Right ventricle myocardium superior (tissue), 1 donor: ENCODE measurements at regions of chr9 and their contacts with region 1.

Region 1: DNA sequence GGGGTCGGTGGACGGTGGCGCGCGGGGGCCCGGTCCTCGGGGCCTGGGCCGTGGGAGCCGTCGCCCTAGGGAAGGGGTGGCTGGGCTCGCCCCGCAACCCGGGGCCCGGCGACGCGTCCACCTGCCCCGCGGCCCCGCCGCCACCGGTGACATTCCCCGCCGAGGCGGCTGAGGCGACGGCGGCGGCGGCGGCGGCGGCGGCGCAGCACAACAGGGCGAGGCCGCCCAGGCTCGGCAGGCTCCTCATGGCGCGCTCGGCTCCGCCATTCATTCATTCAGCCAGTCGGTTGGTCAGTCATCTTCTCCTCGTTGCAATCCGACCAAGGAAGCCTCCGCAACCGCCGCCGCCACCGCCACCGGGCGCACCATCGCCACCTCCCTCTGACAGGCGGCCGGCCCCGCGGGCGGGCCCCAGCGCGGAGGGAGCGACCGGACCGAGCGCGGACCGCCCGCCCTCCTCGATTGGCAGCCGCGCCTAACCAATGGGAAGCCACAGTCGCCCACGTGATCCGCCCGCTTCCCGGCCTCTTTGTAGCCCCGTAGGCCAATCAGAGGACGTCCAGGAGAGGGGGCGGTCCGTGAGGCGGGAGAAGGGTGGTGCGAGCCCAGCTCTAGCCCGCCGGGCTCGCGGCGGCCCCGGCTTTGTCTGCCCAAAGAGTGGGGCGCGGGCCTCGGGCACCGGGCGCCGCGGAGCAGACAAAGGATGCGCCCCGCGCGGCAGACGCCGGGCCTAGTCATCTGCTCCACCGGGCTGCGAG is at the start of gene MEGF9:
- DNase-seq: peak; percentile 99
- ATAC-seq: peak; percentile 96
- total RNA-seq, gene MEGF9: 18.2 TPM

Region 2: DNA sequence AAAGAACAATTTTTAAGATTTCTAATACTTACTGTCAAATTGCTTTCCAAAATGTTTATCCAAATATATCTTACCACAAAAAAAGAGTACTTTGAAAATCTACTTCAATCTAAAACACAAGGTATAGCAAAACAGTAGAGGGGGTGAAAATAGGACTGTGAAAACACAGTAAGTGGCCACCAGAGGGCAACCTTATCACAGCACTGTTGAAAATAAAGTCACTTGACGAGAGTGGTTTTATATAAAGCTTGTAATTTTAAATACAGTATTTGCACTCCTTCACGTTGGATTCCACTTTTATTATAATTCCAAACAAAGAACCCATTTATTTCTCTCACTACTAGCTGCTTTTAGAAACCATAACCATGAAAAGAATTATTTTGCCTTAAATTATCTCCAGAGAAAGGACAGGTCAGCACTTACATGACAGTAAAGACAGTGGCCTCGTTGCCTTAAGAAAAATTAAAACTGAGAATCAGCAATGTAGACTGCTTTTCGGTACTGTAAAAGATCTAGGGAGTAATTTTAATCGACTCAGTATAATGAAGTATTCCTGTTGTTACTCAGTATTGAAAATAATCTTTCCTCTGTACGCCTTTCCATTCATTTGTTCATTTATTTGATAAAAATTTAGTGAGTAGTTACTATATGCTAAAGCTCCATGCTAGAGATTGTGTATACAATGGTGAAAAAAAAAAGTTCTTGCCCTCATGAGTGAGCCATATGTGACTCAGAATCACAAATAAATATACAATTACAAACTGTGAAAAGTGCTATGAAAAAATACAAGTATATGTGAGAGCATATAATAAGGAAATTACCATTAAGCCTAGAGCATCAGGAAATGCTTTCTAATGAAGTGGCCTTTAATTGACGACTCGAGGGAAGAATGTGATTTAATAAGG is 94.3 kb before region 1 on chr9:
- intact Hi-C with region 1: loop called (anchors 10 kb)
- DNase-seq: no peak
- ATAC-seq: peak; percentile 90